ENCODE measurements at regions of chr2 and their contacts with region 1.

Region 1: GRCh38 chr2:159226059-159226461 is 60.4 kb downstream of the WDSUB1 start:
- DNase-seq: no peak
- ATAC-seq: no peak

Region 2: DNA sequence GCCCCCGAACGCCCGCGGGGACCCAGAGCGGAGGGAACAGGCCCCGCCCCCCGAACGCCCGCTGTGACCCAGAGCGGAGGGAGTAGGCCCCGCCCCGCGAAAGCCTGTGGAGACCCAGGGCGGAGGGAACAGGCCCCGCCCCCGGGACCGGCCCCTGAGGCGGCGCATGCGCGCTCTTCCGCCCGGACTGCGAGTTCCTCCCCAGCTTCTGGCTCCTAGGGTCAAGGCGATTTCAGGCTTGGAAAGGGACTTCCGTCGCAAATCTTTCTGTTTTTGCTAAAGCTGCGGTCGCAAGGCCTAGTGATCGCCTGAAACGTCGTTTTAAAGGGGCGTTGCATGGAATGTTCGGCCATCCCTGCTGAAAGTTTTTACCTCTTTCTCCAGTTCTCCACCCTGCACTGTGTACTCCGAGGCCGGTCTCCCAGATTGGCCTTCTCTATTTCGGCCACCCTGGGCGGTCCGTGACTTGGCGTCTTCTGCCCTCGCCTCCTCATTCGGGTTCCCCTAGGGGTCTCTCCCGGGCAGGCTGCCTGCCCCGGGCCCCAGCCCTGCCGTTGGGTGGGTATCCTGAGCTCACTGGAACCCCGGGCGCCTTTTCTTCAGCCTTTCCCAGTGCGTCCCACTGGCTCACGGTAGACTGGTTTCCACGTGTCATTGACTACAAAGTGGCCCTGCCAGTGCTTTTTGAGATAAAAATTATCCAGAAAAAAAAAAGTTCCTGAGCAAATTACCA is 60.8 kb after region 1 on chr2:
- intact Hi-C with region 1: loop called (anchors 10 kb)
- DNase-seq: peak; percentile 100
- ATAC-seq: peak; percentile 100

Region 3: DNA sequence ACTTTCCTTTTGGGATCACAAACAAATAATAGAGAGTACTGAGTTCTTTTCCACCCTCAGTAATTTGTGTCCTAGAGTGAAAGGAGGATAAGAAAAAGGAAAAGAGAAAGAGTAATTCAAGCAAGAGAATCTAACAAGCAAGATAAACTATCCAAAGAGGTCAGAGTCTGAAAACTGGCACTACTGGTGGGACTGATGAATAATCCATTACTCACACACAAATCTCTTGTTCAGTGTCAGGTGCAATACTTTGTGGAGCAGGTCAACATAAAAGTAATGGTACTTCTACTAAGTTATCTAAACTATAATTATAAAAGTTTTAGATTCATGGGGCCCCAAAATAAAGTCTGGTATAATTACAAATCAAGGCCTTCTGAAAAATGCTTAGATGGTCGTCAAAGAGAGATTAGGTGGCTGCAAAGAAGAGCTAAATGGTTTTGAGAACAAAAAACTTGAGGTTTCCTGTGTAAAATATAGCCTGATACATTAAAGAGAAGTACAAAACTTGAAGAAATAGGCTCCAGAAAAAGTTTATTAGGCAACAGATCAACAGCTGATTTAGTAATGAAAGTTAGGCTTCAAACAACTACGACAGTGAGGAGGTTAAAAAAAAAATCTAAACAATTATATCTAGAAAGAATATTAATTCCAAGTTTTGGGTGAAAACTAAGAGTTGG is 280.8 kb after region 1 on chr2:
- intact Hi-C with region 1: no loop called
- DNase-seq: no peak
- ATAC-seq: no peak